Sigmoid colon (tissue), 7 donors: ENCODE measurements at regions of chr9 and their contacts with region 1.

Region 1: GRCh38 chr9:34591248-34591916 is 1.9 kb upstream of the CNTFR start:
- DNase-seq: peak; percentile 93
- H3K4me3 ChIP-seq: peak overlapping the region in 3 of 4 donors; percentile 22 to 27 (median 24)
- H3K27ac ChIP-seq: peak overlapping the region in 2 of 4 donors; percentile 25 to 56
- H3K4me1 ChIP-seq: peaks cover 0 to 54% (median 44%) of the 10 kb centered on the region in 4 donors
- H3K27me3 ChIP-seq: peaks cover 13 to 67% (median 40%) of the 10 kb centered on the region in 3 donors
- CTCF ChIP-seq: peak; percentile 84 to 90 (median 88)
- EP300 ChIP-seq: no peak
- POLR2A ChIP-seq: no peak

Region 2: DNA sequence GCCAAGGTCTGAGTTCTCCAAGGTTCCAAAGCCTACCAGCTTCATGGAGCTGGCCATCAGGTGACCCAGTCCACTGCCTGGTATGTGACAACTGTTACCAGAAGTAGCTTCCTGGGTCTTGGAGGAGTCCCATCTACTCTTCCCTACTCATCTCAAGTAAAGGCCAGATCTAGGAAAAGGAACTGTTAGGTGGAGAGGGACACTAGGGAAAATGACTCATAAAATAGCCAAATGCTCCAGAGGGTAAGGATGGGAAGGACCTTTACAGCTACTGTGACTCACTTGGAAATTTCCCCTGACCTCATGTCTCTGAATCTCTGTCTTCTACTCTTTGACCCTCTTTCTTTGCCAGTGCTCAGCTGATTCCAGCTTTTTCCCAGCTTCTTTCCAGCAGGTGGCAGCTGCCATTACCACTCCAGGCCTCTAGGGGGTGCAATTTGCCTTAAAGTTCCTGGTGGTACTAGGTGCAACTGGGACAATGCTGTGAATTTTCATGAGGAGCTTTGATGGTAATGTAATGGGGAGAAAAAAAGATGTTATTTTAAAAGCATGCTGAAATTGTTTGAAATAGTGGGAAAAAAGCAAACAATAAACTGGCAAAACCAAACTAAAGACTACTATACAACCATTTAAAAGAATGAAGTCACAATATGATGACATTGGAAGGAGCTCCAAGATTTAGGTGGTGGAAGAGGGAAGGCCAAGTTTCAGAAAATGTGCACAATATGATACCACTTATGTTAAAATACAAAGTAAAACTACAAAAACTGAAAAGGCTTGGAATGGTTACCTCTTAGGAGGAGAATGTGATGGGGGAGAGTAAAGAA is 187.6 kb before region 1 on chr9:
- intact Hi-C with region 1: loop called (anchors 5 kb)
- DNase-seq: peak; percentile 84
- H3K4me3 ChIP-seq: no peak overlapping the region
- H3K27ac ChIP-seq: no peak overlapping the region
- H3K4me1 ChIP-seq: peaks cover 0 to 3% (median 0%) of the 10 kb centered on the region in 4 donors
- H3K27me3 ChIP-seq: no peaks in the 10 kb centered on the region
- CTCF ChIP-seq: peak; percentile 86 to 97 (median 95)
- EP300 ChIP-seq: no peak
- POLR2A ChIP-seq: no peak

Region 3: GRCh38 chr9:34458013-34458958 is 133.1 kb before region 1 on chr9 and contains the starts of genes DNAI1 and FAM219A:
- intact Hi-C with region 1: loop called (anchors 5 kb)
- DNase-seq: peak; percentile 99
- H3K4me3 ChIP-seq: peak within 1 kb of the TSS; percentile 59 to 96 (median 70)
- H3K27ac ChIP-seq: peak within 1 kb of the TSS; percentile 82 to 88 (median 84)
- H3K4me1 ChIP-seq: peaks cover 0 to 36% (median 22%) of the 10 kb centered on the region in 4 donors
- H3K27me3 ChIP-seq: no peaks in the 10 kb centered on the region
- CTCF ChIP-seq: no peak
- EP300 ChIP-seq: no peak
- POLR2A ChIP-seq: peak; percentile 55 to 79
- total RNA-seq, gene DNAI1: under 0.01 TPM in 1 of 4 donors, not detected in the others
- total RNA-seq, gene FAM219A: 7.4 to 10.2 (median 8.8) TPM

Region 4: GRCh38 chr9:34522971-34523797 is 68.2 kb before region 1 on chr9 and contains the start of gene ENHO:
- intact Hi-C with region 1: loop called (anchors 5 kb)
- DNase-seq: peak; percentile 93
- H3K4me3 ChIP-seq: peak within 1 kb of the TSS; percentile 16 to 54 (median 50)
- H3K27ac ChIP-seq: peak within 1 kb of the TSS in 3 of 4 donors; percentile 30 to 63 (median 47)
- H3K4me1 ChIP-seq: peaks cover 0 to 13% (median 8%) of the 10 kb centered on the region in 4 donors
- H3K27me3 ChIP-seq: no peaks in the 10 kb centered on the region
- CTCF ChIP-seq: no peak
- EP300 ChIP-seq: no peak
- POLR2A ChIP-seq: no peak
- total RNA-seq, gene ENHO: 2.5 TPM in 1 of 4 donors, not detected in the others

Region 5: GRCh38 chr9:34546834-34547827 is 44.3 kb before region 1 on chr9:
- intact Hi-C with region 1: loop called (anchors 1 kb)
- DNase-seq: peak; percentile 78
- H3K4me3 ChIP-seq: no peak overlapping the region
- H3K27ac ChIP-seq: no peak overlapping the region
- H3K4me1 ChIP-seq: peaks cover 0 to 14% (median 6%) of the 10 kb centered on the region in 4 donors
- H3K27me3 ChIP-seq: no peaks in the 10 kb centered on the region
- CTCF ChIP-seq: peak; percentile 24 to 75 (median 68)
- EP300 ChIP-seq: no peak
- POLR2A ChIP-seq: no peak